HCT116 (cell line): ENCODE measurements at regions of chr9 and their contacts with region 1.

Region 1: GRCh38 chr9:20622330-20623020 is at the start of gene MLLT3:
- DNase-seq: peak; percentile 84
- ATAC-seq: peak; percentile 88
- H3K4me3 ChIP-seq: peak within 1 kb of the TSS; percentile 52 to 75
- H3K27ac ChIP-seq: peak within 1 kb of the TSS; percentile 66
- H3K4me1 ChIP-seq: peaks cover 0 to 23% of the 10 kb centered on the region in 2 experiments; a peak in 2 of 4 replicates
- H3K27me3 ChIP-seq: peaks cover 10% of the 10 kb centered on the region; the same call in 1 of the 2 replicates
- CTCF ChIP-seq: no peak
- POLR2A ChIP-seq: peak; percentile 24
- RAD21 ChIP-seq: no peak
- total RNA-seq, gene MLLT3: 4.3 TPM

Region 2: GRCh38 chr9:20356403-20357035 is 266.0 kb before region 1 on chr9:
- CTCF ChIA-PET with region 1: interaction called, 5 read pairs
- POLR2A ChIA-PET with region 1: no interaction called
- RAD21 ChIA-PET with region 1: no interaction called
- intact Hi-C with region 1: loop called (anchors 5 kb)
- DNase-seq: peak; percentile 43
- ATAC-seq: peak; percentile 91
- H3K4me3 ChIP-seq: no peak overlapping the region
- H3K27ac ChIP-seq: no peak overlapping the region
- H3K4me1 ChIP-seq: no peaks in the 10 kb centered on the region
- H3K27me3 ChIP-seq: peaks cover 5% of the 10 kb centered on the region; the same call in 1 of the 2 replicates
- CTCF ChIP-seq: peak; percentile 49 to 66 (median 62); a peak in 5 of 6 replicates
- POLR2A ChIP-seq: no peak
- RAD21 ChIP-seq: peak; percentile 85

Region 3: DNA sequence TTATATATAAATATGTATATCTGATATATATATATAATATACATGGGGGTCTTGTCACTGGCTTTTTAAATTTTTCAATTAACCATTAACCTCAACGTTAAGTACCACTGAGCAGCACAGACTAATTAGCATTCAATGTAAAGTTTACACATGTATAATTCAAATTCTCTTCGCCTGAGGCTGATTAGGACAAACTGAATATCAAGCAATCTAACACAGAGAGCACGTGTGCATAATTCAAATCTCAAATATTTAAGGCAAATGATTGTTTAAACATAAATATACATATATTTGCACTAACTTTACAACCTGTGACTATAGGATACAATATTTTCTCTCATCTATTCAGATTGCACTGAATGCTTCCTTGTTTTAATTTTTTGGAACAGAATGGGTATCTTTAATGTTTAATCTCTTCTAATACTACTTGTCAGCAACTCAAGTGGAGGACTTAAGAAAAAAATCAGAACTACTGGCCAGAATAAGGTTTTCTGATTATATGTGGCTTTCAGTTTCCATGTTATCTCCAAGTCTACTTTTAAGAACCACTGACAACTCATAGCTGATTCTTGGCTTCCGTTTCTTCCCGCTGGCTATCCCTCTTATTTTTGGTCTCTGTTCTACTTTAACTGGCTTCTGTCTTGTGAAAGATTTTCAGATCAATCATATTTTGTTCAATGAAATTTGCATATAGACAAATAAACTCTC is 204.9 kb before region 1 on chr9:
- CTCF ChIA-PET with region 1: no interaction called
- POLR2A ChIA-PET with region 1: no interaction called
- RAD21 ChIA-PET with region 1: no interaction called
- intact Hi-C with region 1: no loop called
- DNase-seq: no peak
- ATAC-seq: no peak
- H3K4me3 ChIP-seq: no peak overlapping the region
- H3K27ac ChIP-seq: no peak overlapping the region
- H3K4me1 ChIP-seq: no peaks in the 10 kb centered on the region
- H3K27me3 ChIP-seq: peaks cover 6% of the 10 kb centered on the region; the same call in 1 of the 2 replicates
- CTCF ChIP-seq: no peak
- POLR2A ChIP-seq: no peak
- RAD21 ChIP-seq: no peak

Region 4: GRCh38 chr9:20479419-20480155 is 142.9 kb before region 1 on chr9:
- CTCF ChIA-PET with region 1: no interaction called
- POLR2A ChIA-PET with region 1: no interaction called
- RAD21 ChIA-PET with region 1: no interaction called
- intact Hi-C with region 1: no loop called
- DNase-seq: no peak
- ATAC-seq: no peak
- H3K4me3 ChIP-seq: no peak overlapping the region
- H3K27ac ChIP-seq: no peak overlapping the region
- H3K4me1 ChIP-seq: no peaks in the 10 kb centered on the region
- H3K27me3 ChIP-seq: peaks cover 51% of the 10 kb centered on the region
- CTCF ChIP-seq: no peak
- POLR2A ChIP-seq: no peak
- RAD21 ChIP-seq: no peak

Region 5: DNA sequence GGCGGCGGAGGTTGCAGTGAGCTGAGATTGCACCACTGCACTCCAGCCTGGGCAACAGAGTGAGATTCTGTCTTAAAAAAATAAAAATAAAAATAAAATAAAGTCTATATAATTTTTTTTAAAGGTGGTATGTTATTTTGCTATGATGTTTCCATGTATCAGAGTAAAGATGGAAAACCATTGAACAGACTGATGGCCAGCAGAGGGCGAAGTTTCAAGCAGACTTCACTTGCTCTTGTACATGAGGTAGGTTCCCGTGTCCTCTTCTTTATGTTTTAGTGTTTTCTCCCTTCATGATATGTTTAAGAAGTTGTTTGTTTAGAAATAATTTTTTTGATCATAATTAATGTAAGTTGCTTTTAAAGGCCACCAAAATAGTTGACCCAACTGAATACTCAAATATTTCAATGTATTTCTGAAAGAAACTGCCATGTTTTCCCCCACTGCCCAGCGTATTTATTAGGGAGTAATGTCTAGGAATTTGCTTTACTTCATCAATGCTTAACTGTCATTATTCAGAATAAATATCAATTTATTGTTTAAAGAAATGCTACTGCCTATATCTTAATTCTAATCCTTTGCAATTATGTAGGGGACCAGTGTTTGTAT is 262.6 kb after region 1 on chr9:
- CTCF ChIA-PET with region 1: no interaction called
- POLR2A ChIA-PET with region 1: interaction called, 4 read pairs
- RAD21 ChIA-PET with region 1: no interaction called
- intact Hi-C with region 1: loop called (anchors 5 kb)
- DNase-seq: peak; percentile 12
- ATAC-seq: peak; percentile 63; the same call in 1 of the 2 replicates
- H3K4me3 ChIP-seq: no peak overlapping the region
- H3K27ac ChIP-seq: no peak overlapping the region
- H3K4me1 ChIP-seq: no peaks in the 10 kb centered on the region
- H3K27me3 ChIP-seq: no peaks in the 10 kb centered on the region
- CTCF ChIP-seq: peak in 2 of 3 experiments; percentile 60 to 65; a peak in 4 of 6 replicates
- POLR2A ChIP-seq: no peak
- RAD21 ChIP-seq: peak; percentile 38